Activated CD8-positive, alpha-beta T cell treated with anti-CD3 and anti-CD28 coated beads for 36 hours (primary cell): ENCODE measurements at regions of chr5 and their contacts with region 1.

Region 1: GRCh38 chr5:119397518-119398380 is 41.9 kb downstream of the TNFAIP8 start:
- DNase-seq: peak; percentile 44
- ATAC-seq: peak; percentile 72
- H3K4me3 Mint-ChIP-seq: peak overlapping the region; percentile 56
- H3K27ac Mint-ChIP-seq: peak overlapping the region; percentile 98
- H3K4me1 Mint-ChIP-seq: peaks cover 80% of the 10 kb centered on the region
- H3K27me3 Mint-ChIP-seq: no peaks in the 10 kb centered on the region
- CTCF ChIP-seq: no peak

Region 2: DNA sequence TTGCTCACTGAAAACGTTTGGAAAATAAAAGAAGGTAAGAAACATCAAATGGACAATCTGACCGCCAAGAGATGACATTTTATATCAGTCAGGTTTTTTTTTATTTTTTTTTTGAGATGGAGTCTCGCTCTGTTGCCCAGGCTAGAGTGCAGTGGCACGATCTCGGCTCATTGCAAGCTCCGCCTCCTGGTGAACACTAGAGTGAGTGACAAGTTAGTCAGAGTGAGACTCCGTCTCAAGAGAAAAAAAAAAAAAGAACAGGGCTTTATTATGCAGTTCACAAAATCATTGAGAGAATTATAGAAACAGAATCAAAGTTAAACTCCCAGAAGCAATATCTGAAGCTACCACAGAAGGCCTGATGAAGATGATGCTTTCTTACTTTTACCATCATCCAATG is 479.5 kb before region 1 on chr5:
- CTCF ChIA-PET with region 1: no interaction called
- POLR2A ChIA-PET with region 1: no interaction called
- intact Hi-C with region 1: no loop called
- DNase-seq: no peak
- ATAC-seq: no peak
- H3K4me3 Mint-ChIP-seq: no peak overlapping the region
- H3K27ac Mint-ChIP-seq: no peak overlapping the region
- H3K4me1 Mint-ChIP-seq: no peaks in the 10 kb centered on the region
- H3K27me3 Mint-ChIP-seq: no peaks in the 10 kb centered on the region
- CTCF ChIP-seq: no peak

Region 3: DNA sequence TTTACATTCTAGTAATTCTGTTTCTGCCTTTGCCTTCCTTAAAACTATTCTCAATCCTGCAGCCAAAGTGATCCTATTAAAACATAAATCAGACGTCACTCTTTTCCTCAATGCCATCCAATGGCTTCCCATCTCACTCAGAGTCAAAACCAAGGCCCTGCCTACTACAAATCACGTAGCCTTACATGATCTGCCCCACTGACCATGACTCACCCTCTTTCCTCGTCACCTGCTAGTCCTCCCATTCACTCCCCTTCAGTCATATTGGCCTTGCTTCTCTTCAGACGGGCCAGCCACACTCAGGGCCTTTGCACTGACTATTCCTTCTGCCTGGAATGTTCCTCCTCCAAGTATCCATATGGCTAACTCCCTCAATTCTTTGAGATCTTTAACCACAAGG is 365.8 kb before region 1 on chr5:
- CTCF ChIA-PET with region 1: no interaction called
- POLR2A ChIA-PET with region 1: no interaction called
- intact Hi-C with region 1: loop called (anchors 1 kb)
- DNase-seq: peak; percentile 53
- ATAC-seq: peak; percentile 64
- H3K4me3 Mint-ChIP-seq: peak overlapping the region; percentile 28
- H3K27ac Mint-ChIP-seq: peak overlapping the region; percentile 91
- H3K4me1 Mint-ChIP-seq: peaks cover 31% of the 10 kb centered on the region
- H3K27me3 Mint-ChIP-seq: no peaks in the 10 kb centered on the region
- CTCF ChIP-seq: no peak

Region 4: GRCh38 chr5:119243898-119244297 is 153.9 kb before region 1 on chr5:
- CTCF ChIA-PET with region 1: no interaction called
- POLR2A ChIA-PET with region 1: no interaction called
- intact Hi-C with region 1: no loop called
- DNase-seq: no peak
- ATAC-seq: no peak
- H3K4me3 Mint-ChIP-seq: no peak overlapping the region
- H3K27ac Mint-ChIP-seq: no peak overlapping the region
- H3K4me1 Mint-ChIP-seq: peaks cover 4% of the 10 kb centered on the region
- H3K27me3 Mint-ChIP-seq: no peaks in the 10 kb centered on the region
- CTCF ChIP-seq: no peak

Region 5: DNA sequence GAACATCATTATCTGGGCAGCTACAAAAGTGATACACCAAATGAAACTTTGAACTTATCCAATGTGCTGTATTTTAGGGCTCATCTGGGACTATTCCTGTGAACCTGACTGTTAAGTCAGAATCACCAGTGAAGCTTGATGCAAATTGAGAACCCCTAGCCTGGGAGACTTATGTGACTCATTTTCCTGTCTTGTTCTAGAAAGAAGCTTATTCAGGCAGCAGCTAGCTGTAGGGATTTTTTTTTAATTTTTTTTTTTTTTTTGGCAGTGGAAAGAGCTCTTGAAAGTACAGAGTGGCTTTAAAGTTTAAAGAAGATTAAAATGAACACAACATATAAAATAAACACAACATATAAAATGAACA is 123.0 kb before region 1 on chr5:
- CTCF ChIA-PET with region 1: interaction called, 3 read pairs
- POLR2A ChIA-PET with region 1: no interaction called
- intact Hi-C with region 1: loop called (anchors 5 kb)
- DNase-seq: no peak
- ATAC-seq: peak; percentile 67
- H3K4me3 Mint-ChIP-seq: peak overlapping the region; percentile 95
- H3K27ac Mint-ChIP-seq: peak overlapping the region; percentile 92
- H3K4me1 Mint-ChIP-seq: peaks cover 87% of the 10 kb centered on the region
- H3K27me3 Mint-ChIP-seq: no peaks in the 10 kb centered on the region
- CTCF ChIP-seq: no peak

Region 6: DNA sequence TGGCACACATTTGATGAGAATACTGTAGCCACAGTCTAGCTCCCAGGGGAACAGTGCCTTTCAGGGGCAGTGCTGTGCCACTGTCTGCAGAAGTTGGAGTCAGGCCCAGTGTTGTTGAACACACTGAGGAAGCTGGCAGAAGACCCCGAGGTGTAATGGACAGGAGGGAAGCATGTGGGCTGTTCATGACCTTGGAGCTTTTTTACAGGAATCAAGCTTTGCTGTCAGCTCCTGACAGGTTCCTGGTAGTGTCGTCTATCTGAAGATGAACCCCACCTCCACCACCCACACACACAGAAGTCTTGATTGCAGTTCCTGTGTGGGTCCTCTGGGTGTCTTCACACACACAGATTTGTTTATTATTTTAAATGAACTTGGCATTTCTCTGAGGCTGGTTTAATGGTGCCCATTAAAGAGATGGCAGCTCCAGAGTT is 82.2 kb before region 1 on chr5:
- CTCF ChIA-PET with region 1: interaction called, 10 read pairs
- POLR2A ChIA-PET with region 1: interaction called, 3 read pairs
- intact Hi-C with region 1: no loop called
- DNase-seq: peak; percentile 84
- ATAC-seq: peak; percentile 79
- H3K4me3 Mint-ChIP-seq: peak overlapping the region; percentile 38
- H3K27ac Mint-ChIP-seq: peak overlapping the region; percentile 81
- H3K4me1 Mint-ChIP-seq: peaks cover 93% of the 10 kb centered on the region
- H3K27me3 Mint-ChIP-seq: no peaks in the 10 kb centered on the region
- CTCF ChIP-seq: peak; percentile 70

Region 7: GRCh38 chr5:119355685-119356611 is 41.8 kb before region 1 on chr5 and contains the start of gene TNFAIP8:
- CTCF ChIA-PET with region 1: interaction called, 3 read pairs
- POLR2A ChIA-PET with region 1: interaction called, 16 read pairs
- intact Hi-C with region 1: loop called (anchors 5 kb)
- DNase-seq: peak; percentile 85
- ATAC-seq: peak; percentile 63
- H3K4me3 Mint-ChIP-seq: peak within 1 kb of the TSS; percentile 98
- H3K27ac Mint-ChIP-seq: peak within 1 kb of the TSS; percentile 97
- H3K4me1 Mint-ChIP-seq: peaks cover 62% of the 10 kb centered on the region
- H3K27me3 Mint-ChIP-seq: no peaks in the 10 kb centered on the region
- CTCF ChIP-seq: no peak
- total RNA-seq, gene TNFAIP8: 135 to 141 TPM

Region 8: DNA sequence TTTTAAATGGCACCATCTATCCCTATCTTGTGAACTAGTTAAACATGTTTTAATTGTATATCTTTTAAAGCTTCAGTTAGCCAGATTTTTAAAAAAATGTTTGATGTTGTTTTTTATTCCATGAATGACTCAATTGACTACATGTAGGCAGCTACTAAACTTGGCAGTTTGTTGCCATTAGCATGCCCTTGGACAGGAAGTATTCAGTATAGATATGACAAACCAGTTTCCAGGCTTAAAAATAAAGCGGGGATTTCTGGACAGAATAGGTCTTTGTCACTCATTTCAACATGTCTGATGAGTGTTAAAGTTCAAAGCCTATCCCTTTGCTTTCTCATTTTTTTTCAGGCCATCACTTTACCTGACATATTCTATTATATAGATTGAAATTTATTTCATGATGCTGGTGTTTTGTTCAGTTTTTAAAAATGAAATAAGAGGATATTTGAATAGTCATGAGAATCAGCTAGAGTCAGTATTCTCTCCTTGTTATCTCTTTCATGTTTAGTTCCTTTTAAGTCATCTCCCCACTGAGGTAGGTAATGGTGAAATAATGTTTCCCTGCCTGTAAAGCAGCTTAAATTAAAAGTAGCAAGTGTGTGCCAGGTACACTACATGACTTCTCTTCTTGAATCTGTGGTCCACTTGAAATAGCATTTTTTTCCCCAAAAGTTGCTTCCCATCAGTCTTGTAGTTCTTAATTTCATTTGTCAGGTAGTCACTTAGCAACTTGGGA is 30.1 kb before region 1 on chr5:
- CTCF ChIA-PET with region 1: interaction called, 3 read pairs
- POLR2A ChIA-PET with region 1: interaction called, 5 read pairs
- intact Hi-C with region 1: loop called (anchors 1 kb)
- DNase-seq: peak; percentile 48
- ATAC-seq: peak; percentile 65
- H3K4me3 Mint-ChIP-seq: peak overlapping the region; percentile 67
- H3K27ac Mint-ChIP-seq: peak overlapping the region; percentile 99
- H3K4me1 Mint-ChIP-seq: peaks cover 81% of the 10 kb centered on the region
- H3K27me3 Mint-ChIP-seq: no peaks in the 10 kb centered on the region
- CTCF ChIP-seq: no peak

Region 9: DNA sequence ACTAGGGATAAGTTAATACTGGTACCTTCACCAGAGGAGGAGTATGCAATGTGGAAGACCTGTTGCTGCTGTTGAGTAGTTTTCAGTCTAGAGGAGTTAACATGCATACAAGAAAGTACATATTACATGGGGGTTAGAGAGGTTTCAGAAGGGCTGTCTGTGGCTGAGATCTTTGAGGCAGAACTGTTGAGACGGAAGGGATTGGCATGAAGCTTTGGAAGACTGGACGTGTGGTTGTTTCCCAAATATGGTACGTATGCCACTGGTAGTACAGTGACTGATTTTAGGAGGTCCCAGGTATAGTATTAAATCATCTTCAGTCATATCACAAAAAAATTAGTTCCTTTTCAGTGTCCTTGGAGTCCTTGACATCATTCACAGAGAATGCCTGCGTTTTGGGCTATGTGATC is 24.3 kb before region 1 on chr5:
- CTCF ChIA-PET with region 1: interaction called, 3 read pairs
- POLR2A ChIA-PET with region 1: interaction called, 14 read pairs
- intact Hi-C with region 1: no loop called
- DNase-seq: no peak
- ATAC-seq: no peak
- H3K4me3 Mint-ChIP-seq: no peak overlapping the region
- H3K27ac Mint-ChIP-seq: peak overlapping the region; percentile 54
- H3K4me1 Mint-ChIP-seq: peaks cover 72% of the 10 kb centered on the region
- H3K27me3 Mint-ChIP-seq: no peaks in the 10 kb centered on the region
- CTCF ChIP-seq: no peak

Region 10: DNA sequence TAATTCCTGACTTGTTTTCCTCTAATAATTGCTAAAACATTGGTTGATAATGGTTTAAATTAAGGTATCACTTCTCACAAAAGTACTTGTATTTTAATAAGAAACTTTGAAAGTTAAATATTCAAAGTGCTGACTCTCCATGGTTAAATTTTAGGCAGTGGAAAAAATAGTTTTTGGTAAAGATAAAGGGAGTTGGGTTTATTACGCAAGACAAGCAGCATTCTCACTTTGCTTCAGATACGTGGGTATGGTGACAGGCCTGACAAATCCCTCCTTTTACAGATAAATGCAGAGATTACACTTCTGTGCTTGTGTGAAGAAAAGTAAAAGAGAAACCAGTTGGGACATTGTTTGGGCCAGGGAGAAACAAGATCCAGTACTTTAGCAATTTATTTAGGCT is 217.1 kb after region 1 on chr5:
- CTCF ChIA-PET with region 1: no interaction called
- POLR2A ChIA-PET with region 1: no interaction called
- intact Hi-C with region 1: no loop called
- DNase-seq: no peak
- ATAC-seq: no peak
- H3K4me3 Mint-ChIP-seq: no peak overlapping the region
- H3K27ac Mint-ChIP-seq: no peak overlapping the region
- H3K4me1 Mint-ChIP-seq: no peaks in the 10 kb centered on the region
- H3K27me3 Mint-ChIP-seq: peaks cover 2% of the 10 kb centered on the region
- CTCF ChIP-seq: no peak

Region 11: DNA sequence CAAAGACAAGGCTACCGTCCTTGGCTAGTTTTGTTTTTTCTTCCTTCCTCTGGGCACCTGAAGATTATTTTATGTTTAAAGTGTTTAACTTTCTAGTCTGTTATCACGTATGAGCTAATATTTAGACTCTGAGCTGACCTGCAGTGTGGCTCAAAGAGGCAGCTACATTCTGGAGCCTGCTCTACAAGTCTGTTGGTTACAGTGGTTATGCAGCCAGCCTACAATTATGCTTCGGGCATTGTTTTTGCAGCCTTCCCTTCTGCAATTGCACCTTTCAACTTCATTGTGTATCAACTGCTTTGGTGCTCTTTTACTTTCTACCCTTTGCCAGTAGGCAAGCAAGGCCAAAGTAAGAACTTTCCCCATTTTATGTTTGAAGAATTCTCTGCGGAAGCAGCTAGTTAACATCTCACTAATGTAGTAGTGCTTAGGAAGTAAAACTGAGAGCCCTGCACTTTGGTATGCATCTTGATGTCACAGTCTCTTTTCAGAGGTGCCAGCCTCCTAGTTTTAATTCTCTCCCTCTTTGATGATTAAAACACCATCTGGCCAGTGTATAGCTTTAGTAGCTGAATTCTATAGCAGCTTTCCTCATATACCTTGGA is 553.7 kb after region 1 on chr5:
- CTCF ChIA-PET with region 1: no interaction called
- POLR2A ChIA-PET with region 1: no interaction called
- intact Hi-C with region 1: no loop called
- DNase-seq: no peak
- ATAC-seq: no peak
- H3K4me3 Mint-ChIP-seq: no peak overlapping the region
- H3K27ac Mint-ChIP-seq: no peak overlapping the region
- H3K4me1 Mint-ChIP-seq: no peaks in the 10 kb centered on the region
- H3K27me3 Mint-ChIP-seq: no peaks in the 10 kb centered on the region
- CTCF ChIP-seq: no peak